ENCODE measurements at regions of chr3 and their contacts with region 1.

Region 1: DNA sequence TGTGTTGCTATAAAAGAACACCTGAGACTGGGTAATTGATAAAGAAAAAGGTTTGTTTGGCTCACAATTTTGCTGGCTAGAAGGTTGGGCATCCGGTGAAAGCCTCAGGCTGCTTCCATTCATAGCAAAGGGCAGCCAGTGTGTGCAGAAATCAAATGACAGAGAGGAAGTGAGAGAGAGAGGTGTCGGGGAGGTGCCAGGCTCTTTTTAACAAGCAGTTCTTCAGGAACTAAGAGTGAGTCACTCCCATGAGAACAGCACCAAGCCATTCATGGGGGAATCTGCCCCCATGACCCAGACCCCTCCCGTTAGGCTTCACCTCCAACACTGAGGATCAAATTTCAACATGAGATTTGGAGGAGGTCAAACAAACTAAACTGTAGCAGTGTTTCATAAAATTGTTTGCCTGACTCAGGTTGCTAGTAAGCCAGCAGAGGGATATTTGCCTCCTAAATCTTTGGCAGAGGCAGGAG is 4.5 kb upstream of the PARP15 start:
- DNase-seq: peak; percentile 73
- ATAC-seq: peak; percentile 22
- H3K4me3 ChIP-seq: no peak overlapping the region
- H3K4me3 Mint-ChIP-seq: peak overlapping the region; percentile 20
- H3K27ac ChIP-seq: peak overlapping the region; percentile 66 to 78
- H3K27ac Mint-ChIP-seq: peak overlapping the region; percentile 93
- H3K4me1 ChIP-seq: peaks cover 65 to 73% of the 10 kb centered on the region in 2 donors
- H3K4me1 Mint-ChIP-seq: peaks cover 75% of the 10 kb centered on the region
- H3K27me3 ChIP-seq: no peaks in the 10 kb centered on the region
- H3K27me3 Mint-ChIP-seq: no peaks in the 10 kb centered on the region
- CTCF ChIP-seq: no peak

Region 2: GRCh38 chr3:122514123-122515019 is 58.6 kb before region 1 on chr3 and contains the start of gene KPNA1:
- CTCF ChIA-PET with region 1: no interaction called
- POLR2A ChIA-PET with region 1: interaction called, 3 read pairs
- intact Hi-C with region 1: loop called (anchors 2 kb)
- DNase-seq: peak; percentile 94
- ATAC-seq: peak; percentile 79
- H3K4me3 ChIP-seq: peak within 1 kb of the TSS; percentile 64 to 90 (median 85)
- H3K4me3 Mint-ChIP-seq: peak within 1 kb of the TSS; percentile 81
- H3K27ac ChIP-seq: peak within 1 kb of the TSS; percentile 92 to 99
- H3K27ac Mint-ChIP-seq: peak within 1 kb of the TSS; percentile 96
- H3K4me1 ChIP-seq: peaks cover 11 to 15% of the 10 kb centered on the region in 2 donors
- H3K4me1 Mint-ChIP-seq: peaks cover 34% of the 10 kb centered on the region
- H3K27me3 ChIP-seq: no peaks in the 10 kb centered on the region
- H3K27me3 Mint-ChIP-seq: no peaks in the 10 kb centered on the region
- CTCF ChIP-seq: no peak
- total RNA-seq, gene KPNA1: 79.4 and 85.9 TPM in 2 replicates

Region 3: DNA sequence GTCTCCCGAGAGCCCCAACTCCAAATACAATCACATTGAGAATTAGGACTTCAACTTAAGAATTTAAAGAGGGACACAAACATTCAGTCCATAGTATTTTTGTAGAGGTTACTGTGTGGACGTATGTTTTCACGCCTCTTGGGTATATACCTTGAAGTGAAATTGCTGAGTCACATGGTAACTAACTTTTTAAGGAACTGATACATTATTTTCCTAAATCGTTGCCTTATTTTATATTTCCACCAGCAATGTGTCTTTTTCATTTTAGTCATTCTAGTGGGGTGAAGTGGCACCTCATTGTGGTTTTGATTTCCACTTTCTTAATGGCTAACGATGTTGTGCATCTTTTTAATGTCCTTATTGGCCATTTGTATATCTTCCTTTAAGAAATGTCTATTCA is 16.3 kb after region 1 on chr3:
- CTCF ChIA-PET with region 1: no interaction called
- POLR2A ChIA-PET with region 1: no interaction called
- intact Hi-C with region 1: loop called (anchors 2 kb)
- DNase-seq: peak; percentile 42
- ATAC-seq: peak; percentile 40
- H3K4me3 ChIP-seq: no peak overlapping the region
- H3K4me3 Mint-ChIP-seq: peak overlapping the region; percentile 46
- H3K27ac ChIP-seq: peak overlapping the region; percentile 22 to 76
- H3K27ac Mint-ChIP-seq: peak overlapping the region; percentile 85
- H3K4me1 ChIP-seq: peaks cover 36 to 40% of the 10 kb centered on the region in 2 donors
- H3K4me1 Mint-ChIP-seq: peaks cover 68% of the 10 kb centered on the region
- H3K27me3 ChIP-seq: no peaks in the 10 kb centered on the region
- H3K27me3 Mint-ChIP-seq: no peaks in the 10 kb centered on the region
- CTCF ChIP-seq: no peak

Region 4: DNA sequence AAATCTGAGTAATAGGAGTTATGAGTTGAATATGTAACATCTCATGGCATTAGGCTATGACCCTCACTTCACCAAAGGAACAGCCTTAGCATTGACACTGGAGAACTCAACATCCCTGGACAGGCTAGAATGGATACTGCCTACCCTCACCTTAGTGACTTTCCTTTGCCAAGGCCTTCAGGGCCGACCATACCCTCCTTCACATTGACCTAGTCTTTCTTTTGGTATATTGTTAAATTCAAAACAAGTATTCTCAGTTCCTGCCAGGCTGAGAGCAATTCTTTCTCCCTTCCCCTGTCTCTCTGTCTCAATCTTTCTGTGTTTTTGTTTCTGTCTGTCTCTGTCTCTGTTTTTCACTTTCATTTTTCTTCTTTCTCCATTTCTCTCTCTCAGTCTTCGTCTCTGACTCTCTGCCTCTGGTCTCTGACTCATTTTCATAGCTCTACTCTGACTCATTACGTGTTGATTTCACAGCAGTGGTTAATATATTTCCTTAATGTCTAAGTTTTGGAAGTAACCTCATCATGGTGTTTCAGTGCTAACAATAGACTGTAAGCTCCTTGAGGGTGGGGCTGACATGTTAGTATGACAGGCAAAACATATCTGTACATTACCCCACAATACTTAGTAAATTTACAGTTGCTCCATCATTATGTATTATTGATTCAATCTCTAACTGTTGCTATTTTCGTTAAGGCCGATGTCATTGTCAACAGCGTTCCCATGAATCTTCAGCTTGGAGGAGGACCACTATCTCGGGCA is 37.0 kb after region 1 on chr3:
- CTCF ChIA-PET with region 1: no interaction called
- POLR2A ChIA-PET with region 1: interaction called, 12 read pairs
- intact Hi-C with region 1: no loop called
- DNase-seq: no peak
- ATAC-seq: peak; percentile 80
- H3K4me3 ChIP-seq: no peak overlapping the region
- H3K4me3 Mint-ChIP-seq: peak overlapping the region; percentile 73
- H3K27ac ChIP-seq: peak overlapping the region in 1 of 2 donors; percentile 78
- H3K27ac Mint-ChIP-seq: peak overlapping the region; percentile 86
- H3K4me1 ChIP-seq: peaks cover 8 to 15% of the 10 kb centered on the region in 2 donors
- H3K4me1 Mint-ChIP-seq: peaks cover 27% of the 10 kb centered on the region
- H3K27me3 ChIP-seq: no peaks in the 10 kb centered on the region
- H3K27me3 Mint-ChIP-seq: no peaks in the 10 kb centered on the region
- CTCF ChIP-seq: no peak

Region 5: DNA sequence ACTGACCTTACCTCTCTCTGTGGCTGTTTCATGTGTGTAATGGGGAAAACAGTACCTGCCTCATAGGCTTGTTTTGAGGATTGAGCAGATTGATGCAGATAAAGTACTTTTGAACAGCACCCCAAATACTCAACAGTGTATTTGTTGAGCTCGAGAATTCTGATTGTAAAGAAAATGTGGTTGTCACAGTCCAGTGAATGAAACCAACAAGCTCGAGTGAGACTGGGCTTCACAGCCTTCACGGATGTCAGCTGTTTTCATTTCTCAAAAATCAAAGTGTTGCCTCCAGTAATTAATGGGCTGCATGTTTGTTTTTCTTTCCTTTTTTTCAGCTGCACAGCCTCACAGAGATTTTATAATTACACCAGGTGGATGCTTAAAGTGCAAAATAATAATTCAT is 48.1 kb after region 1 on chr3:
- CTCF ChIA-PET with region 1: interaction called, 3 read pairs
- POLR2A ChIA-PET with region 1: interaction called, 8 read pairs
- intact Hi-C with region 1: loop called (anchors 1 kb)
- DNase-seq: peak; percentile 56
- ATAC-seq: peak; percentile 39
- H3K4me3 ChIP-seq: no peak overlapping the region
- H3K4me3 Mint-ChIP-seq: peak overlapping the region; percentile 69
- H3K27ac ChIP-seq: peak overlapping the region; percentile 52 to 77
- H3K27ac Mint-ChIP-seq: peak overlapping the region; percentile 92
- H3K4me1 ChIP-seq: peaks cover 36 to 63% of the 10 kb centered on the region in 2 donors
- H3K4me1 Mint-ChIP-seq: peaks cover 67% of the 10 kb centered on the region
- H3K27me3 ChIP-seq: no peaks in the 10 kb centered on the region
- H3K27me3 Mint-ChIP-seq: no peaks in the 10 kb centered on the region
- CTCF ChIP-seq: no peak

Region 6: DNA sequence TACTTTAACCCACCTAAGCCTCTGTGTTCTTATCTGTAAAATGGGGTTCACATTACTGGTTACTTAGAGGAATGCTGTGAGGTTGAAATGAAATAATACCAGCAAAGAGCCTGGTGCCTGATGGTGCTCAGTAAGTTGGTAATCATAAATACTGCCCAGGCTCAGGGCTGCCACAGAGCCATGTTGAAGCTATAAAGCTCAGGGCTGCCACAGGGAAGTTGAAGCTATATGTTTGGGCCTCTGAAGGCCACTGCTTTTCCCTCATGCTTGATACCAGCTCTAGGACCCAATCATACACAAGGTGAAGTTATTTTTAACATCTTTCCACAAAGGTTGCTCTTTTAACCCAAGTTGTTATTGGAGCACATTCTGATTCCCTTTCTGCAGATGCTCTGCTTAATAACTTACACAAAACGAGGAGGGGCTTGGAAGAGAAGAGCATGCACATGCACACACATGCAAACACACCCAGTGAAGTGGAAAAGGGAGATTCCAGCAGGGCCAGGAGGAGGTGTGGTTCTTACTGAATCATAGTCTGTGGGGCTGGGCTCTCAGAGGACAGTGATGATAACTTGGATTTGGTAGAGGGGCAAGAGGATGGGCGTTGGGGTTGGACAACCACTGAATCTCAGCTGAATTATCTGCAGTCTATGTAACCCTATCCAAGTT is 125.1 kb after region 1 on chr3:
- CTCF ChIA-PET with region 1: interaction called, 3 read pairs
- POLR2A ChIA-PET with region 1: no interaction called
- intact Hi-C with region 1: loop called (anchors 1 kb)
- DNase-seq: peak; percentile 89
- ATAC-seq: peak; percentile 96
- H3K4me3 ChIP-seq: peak overlapping the region in 1 of 5 experiments; percentile 48
- H3K4me3 Mint-ChIP-seq: peak overlapping the region; percentile 59
- H3K27ac ChIP-seq: peak overlapping the region; percentile 84 to 95
- H3K27ac Mint-ChIP-seq: peak overlapping the region; percentile 88
- H3K4me1 ChIP-seq: peaks cover 78 to 83% of the 10 kb centered on the region in 2 donors
- H3K4me1 Mint-ChIP-seq: peaks cover 85% of the 10 kb centered on the region
- H3K27me3 ChIP-seq: no peaks in the 10 kb centered on the region
- H3K27me3 Mint-ChIP-seq: no peaks in the 10 kb centered on the region
- CTCF ChIP-seq: no peak